ENCODE measurements at regions of chr1 and their contacts with region 1.

Region 1: GRCh38 chr1:150235852-150236613 is at the start of gene ANP32E:
- DNase-seq: peak; percentile 93
- H3K4me3 Mint-ChIP-seq: no peak within 1 kb of the TSS
- H3K27ac Mint-ChIP-seq: peak within 1 kb of the TSS; percentile 99
- H3K4me1 Mint-ChIP-seq: peaks cover 19% of the 10 kb centered on the region
- H3K27me3 Mint-ChIP-seq: peaks cover 3% of the 10 kb centered on the region
- total RNA-seq, gene ANP32E: 196 and 217 TPM in 2 replicates

Region 2: DNA sequence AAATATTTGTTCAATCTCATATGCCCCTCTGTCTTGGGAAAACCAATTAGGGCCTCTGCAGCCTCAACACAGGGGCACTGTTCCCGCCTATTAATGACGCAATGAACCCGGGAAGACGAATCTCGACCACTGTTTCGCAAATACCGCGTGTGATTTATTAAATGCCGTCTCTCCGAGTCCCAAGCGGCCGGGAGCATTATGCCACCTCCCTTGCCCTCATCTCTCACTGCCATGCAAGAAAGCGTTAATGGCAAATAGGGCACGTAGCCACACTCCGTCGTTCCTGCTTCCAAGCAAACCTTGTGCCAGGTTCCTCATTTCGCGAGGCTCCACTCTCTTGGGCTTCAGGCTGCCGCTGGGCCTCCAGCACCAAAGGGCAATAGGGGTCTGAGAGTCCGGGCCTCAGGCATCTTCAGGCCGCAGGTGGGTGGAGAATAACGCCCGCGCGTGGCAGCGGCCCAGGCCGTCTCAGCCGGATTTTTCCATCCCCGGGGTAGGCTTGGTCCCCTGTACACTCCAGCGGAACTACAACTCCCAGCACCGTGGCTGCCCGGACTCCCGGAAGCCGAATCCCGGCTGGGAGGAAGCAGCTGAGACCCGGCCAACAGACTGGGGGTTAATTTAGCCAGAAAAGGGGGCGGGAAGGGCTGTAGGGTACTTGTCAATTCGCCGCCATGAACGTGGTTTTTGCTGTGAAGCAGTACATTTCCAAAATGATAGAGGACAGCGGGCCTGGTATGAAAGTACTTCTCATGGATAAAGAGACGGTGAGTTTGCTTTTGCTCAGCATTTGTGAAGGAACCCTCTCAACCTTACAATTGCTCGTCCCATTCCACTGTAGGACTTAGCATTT is 168.6 kb before region 1 on chr1 and contains the start of gene VPS45:
- intact Hi-C with region 1: loop called (anchors 1 kb)
- DNase-seq: peak; percentile 83
- H3K4me3 Mint-ChIP-seq: peak within 1 kb of the TSS; percentile 97
- H3K27ac Mint-ChIP-seq: peak within 1 kb of the TSS; percentile 98
- H3K4me1 Mint-ChIP-seq: peaks cover 45% of the 10 kb centered on the region
- H3K27me3 Mint-ChIP-seq: peaks cover 5% of the 10 kb centered on the region
- total RNA-seq, gene VPS45: 25.9 and 30.2 TPM in 2 replicates

Region 3: DNA sequence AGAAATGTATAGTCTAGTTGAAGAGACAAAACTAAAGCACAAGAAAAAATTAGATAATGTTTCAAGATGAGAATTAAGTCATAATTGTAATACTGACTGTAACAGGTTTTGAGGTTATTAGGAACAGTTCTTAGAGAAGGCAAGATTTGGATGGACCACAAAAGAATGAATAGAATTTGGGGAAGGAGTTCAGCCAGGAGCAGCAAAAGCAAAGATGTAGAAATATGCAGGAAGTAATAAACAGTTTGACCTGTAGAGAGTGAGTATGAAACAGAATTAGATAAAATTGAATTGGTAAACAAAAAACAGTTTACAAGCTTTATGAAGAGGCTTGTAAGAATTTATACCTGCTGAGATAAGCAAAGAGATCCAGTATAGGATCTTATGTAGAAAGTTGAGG is 152.1 kb before region 1 on chr1:
- intact Hi-C with region 1: no loop called
- DNase-seq: no peak
- H3K4me3 Mint-ChIP-seq: no peak overlapping the region
- H3K27ac Mint-ChIP-seq: no peak overlapping the region
- H3K4me1 Mint-ChIP-seq: no peaks in the 10 kb centered on the region
- H3K27me3 Mint-ChIP-seq: no peaks in the 10 kb centered on the region

Region 4: DNA sequence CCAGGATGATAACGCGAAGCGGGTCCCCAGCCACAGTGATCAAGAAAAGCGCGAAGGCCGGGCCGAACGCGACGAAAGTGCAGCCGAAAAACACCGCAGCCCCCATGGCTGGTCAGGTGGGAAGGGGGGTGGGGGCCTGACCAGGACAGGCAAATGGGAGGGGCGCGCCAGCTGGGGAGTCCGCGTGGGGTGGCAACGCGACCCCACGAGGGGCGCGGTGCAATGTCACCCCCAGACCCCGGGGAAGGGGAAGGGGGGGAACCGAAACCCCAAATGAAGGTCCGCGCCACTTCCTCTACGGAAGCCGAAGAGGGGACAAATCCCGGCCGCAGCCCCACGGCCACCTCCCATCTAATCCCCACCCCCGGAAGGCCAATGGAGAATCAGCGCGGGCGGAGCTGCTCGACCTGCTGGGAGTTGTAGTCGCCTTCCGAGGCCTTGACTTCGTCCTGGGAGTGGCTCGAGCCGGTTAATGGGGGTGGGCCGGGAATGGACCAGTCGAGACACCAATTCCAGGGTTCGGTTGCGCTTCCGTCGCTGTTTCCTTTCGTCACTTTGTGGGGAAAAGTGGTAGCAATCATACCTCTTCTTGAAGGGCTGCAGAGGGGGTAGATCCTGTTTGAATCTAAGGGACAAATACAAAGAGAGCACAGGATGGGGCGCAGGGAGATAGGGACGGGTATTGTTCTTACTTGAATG is 32.8 kb after region 1 on chr1 and contains the start of gene APH1A:
- intact Hi-C with region 1: loop called (anchors 1 kb)
- DNase-seq: peak; percentile 94
- H3K4me3 Mint-ChIP-seq: peak within 1 kb of the TSS; percentile 93
- H3K27ac Mint-ChIP-seq: peak within 1 kb of the TSS; percentile 85
- H3K4me1 Mint-ChIP-seq: peaks cover 30% of the 10 kb centered on the region
- H3K27me3 Mint-ChIP-seq: peaks cover 3% of the 10 kb centered on the region
- total RNA-seq, gene APH1A: 102 and 111 TPM in 2 replicates

Region 5: DNA sequence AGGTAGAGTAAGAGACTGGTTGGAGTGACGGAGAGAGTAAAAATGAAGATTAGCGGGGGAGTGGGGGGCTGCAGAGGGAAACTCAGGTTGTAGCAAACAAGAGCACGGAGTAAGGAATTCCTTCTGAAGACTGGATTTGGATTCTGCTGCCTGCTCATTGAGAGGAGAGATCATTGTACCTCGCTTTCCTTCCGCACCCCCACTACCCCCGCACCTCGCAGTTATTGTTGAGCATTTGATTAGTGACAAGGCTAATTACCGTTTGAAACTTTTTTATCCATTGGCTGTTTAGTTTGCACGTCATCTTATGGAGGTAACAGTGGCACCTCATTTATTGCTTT is 85.8 kb after region 1 on chr1:
- intact Hi-C with region 1: loop called (anchors 1 kb)
- DNase-seq: no peak
- H3K4me3 Mint-ChIP-seq: peak overlapping the region; percentile 99
- H3K27ac Mint-ChIP-seq: peak overlapping the region; percentile 98
- H3K4me1 Mint-ChIP-seq: peaks cover 28% of the 10 kb centered on the region
- H3K27me3 Mint-ChIP-seq: peaks cover 1% of the 10 kb centered on the region

Region 6: DNA sequence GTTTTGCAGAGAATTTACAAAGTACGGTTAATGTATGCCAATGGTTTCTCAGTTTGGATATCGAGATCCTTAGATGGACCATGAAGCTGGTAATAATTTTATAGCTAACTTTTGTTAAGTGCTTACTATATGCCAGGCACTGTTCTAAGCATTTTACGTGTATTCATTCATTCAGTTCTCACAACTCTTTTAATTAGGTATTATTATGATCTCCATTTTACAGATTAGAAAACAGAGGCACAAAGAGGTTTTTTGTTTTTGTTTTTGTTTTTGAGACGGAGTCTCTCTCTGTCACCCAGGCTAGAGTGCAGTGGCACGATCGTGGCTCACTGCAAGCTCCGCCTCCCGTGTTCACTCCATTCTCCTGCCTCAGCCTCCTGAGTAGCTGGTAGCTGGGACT is 135.1 kb after region 1 on chr1:
- intact Hi-C with region 1: no loop called
- DNase-seq: no peak
- H3K4me3 Mint-ChIP-seq: peak overlapping the region; percentile 0
- H3K27ac Mint-ChIP-seq: no peak overlapping the region
- H3K4me1 Mint-ChIP-seq: peaks cover 63% of the 10 kb centered on the region
- H3K27me3 Mint-ChIP-seq: no peaks in the 10 kb centered on the region

Region 7: DNA sequence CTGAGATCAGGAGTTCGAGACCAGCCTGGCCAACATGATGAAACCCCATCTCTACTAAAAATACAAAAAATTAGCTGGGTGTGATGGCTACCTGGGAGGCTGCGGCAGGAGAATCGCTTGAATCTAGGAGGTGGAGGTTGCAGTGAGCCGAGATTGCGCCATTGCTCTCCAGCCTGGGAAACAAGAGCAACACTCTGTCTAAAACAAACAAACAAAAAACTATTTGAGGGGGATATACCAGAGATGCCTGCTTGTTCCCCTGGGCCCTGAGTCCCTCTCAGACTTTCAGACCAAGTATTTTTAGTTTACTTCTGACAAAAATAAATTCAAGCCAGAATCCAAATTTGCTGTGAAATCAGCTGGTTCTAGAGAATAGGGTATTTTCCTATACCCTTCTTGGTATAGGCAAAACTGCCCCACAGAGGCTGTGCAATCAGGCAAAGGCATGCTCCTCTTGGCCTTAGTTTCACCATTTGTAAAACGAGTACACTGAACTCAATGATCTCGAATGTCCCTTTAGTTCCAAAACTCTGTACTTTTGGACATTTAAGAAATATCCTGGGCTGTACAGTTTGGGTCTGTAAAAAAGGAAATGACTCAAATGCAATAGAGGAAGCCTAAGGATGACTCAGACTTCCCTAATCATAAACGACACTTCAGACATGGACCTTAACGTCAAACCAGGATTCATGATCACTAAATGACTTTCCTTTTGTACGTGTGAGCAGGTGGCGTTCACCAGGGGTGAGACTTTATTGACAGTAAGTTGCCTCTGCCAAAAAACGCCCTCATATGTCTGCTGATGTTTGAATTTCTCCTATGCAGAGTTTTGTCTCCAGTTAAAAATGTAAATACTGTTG is 377.3 kb after region 1 on chr1:
- intact Hi-C with region 1: loop called (anchors 1 kb)
- DNase-seq: peak; percentile 49
- H3K4me3 Mint-ChIP-seq: peak overlapping the region; percentile 53
- H3K27ac Mint-ChIP-seq: peak overlapping the region; percentile 98
- H3K4me1 Mint-ChIP-seq: peaks cover 62% of the 10 kb centered on the region
- H3K27me3 Mint-ChIP-seq: no peaks in the 10 kb centered on the region